ENCODE measurements at regions of chr21 and their contacts with region 1.

Region 1: DNA sequence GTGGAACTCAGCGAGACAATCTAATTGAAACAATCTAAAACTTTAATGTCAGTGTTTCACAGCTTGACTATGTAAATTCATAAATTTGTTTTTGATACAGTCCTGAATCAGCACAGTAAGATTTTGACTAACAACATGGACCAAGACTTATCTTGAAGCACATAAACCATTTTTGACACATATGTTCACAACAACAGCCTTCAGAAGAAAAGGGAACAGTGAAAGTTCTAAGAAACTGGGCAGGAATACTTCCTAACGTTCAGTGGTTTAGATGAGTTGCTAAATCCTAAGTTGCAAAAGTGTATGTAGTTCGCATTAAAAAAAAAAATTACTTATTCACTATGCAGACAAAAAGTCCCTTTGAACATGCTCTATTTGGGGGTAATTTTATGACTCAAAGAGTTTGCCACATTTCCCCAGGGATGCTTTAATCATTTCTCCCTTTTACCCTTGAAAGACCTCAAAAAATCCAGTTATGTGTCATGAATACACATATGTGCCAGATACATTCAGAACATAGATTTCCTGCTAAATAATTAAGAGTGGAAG is 120.2 kb downstream of the MRPL39 start:
- DNase-seq: no peak
- ATAC-seq: peak; percentile 85
- H3K4me3 Mint-ChIP-seq: peak overlapping the region; percentile 49
- H3K27ac Mint-ChIP-seq: peak overlapping the region; percentile 90
- H3K4me1 Mint-ChIP-seq: peaks cover 73% of the 10 kb centered on the region
- H3K27me3 Mint-ChIP-seq: no peaks in the 10 kb centered on the region
- CTCF ChIP-seq: no peak

Region 2: DNA sequence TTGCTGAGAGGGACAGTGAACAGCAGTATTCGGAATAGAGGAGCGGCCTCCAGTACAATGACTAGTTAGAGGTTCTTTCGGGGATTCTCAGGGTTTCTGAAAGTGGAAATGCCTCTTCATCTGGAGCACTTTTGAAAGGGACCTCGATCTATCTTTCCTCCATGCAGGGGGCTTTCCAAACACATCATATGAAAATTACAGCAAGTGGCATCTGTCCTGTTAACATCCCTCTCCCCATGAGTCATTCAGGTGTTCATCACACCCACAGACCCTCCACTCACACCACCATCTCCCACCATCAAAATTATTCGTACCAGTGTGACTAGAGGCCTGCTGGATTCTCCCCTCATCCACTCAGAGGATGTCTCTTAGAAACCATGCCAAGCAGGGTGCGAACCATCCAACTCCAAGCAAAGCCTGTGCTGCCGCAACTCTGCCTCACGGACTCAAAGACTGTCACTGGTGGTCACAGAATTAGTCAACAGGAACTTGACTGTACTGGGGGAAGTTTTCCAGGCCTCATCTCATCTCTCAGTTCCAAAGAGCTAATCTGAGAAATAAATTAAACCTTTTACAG is 90.9 kb before region 1 on chr21:
- CTCF ChIA-PET with region 1: no interaction called
- POLR2A ChIA-PET with region 1: no interaction called
- intact Hi-C with region 1: loop called (anchors 1 kb)
- DNase-seq: peak; percentile 33
- ATAC-seq: peak; percentile 88
- H3K4me3 Mint-ChIP-seq: peak overlapping the region; percentile 81
- H3K27ac Mint-ChIP-seq: peak overlapping the region; percentile 84
- H3K4me1 Mint-ChIP-seq: peaks cover 31% of the 10 kb centered on the region
- H3K27me3 Mint-ChIP-seq: no peaks in the 10 kb centered on the region
- CTCF ChIP-seq: no peak

Region 3: GRCh38 chr21:25457411-25457810 is 29.7 kb before region 1 on chr21:
- CTCF ChIA-PET with region 1: no interaction called
- POLR2A ChIA-PET with region 1: interaction called, 13 read pairs
- intact Hi-C with region 1: loop called (anchors 1 kb)
- DNase-seq: no peak
- ATAC-seq: peak; percentile 65
- H3K4me3 Mint-ChIP-seq: peak overlapping the region; percentile 65
- H3K27ac Mint-ChIP-seq: peak overlapping the region; percentile 87
- H3K4me1 Mint-ChIP-seq: peaks cover 66% of the 10 kb centered on the region
- H3K27me3 Mint-ChIP-seq: no peaks in the 10 kb centered on the region
- CTCF ChIP-seq: no peak

Region 4: DNA sequence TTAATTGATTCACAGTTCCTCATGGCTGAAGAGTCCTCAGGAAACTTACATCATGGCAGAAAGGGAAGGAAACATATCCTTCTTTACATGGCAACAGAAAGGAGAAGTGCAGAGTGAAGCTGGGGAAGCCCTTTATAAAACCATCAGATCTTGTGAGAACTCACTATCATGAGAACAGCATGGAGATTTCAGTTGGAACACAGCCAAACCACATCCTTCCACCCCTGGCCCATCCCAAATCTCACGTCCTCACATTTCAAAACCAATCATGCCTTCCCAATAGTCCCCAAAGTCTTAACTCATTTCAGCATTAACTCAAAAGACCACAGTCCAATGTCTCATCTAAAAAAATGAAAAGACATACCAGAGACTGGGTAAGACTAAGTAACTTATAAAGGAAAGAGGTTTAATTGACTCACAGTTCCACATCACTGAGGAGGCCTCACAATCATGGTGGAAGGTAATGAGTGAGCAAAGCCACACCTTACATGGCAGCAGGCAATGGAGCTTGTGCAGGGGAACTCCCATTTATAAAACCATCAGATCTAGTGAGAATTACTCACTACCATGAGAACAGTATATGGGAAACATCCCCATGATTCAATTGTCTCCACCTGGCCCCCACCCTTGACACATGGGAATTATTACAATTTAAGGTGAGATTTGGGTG is 15.0 kb after region 1 on chr21:
- CTCF ChIA-PET with region 1: interaction called, 6 read pairs
- POLR2A ChIA-PET with region 1: interaction called, 4 read pairs
- intact Hi-C with region 1: loop called (anchors 1 kb)
- DNase-seq: no peak
- ATAC-seq: peak; percentile 83
- H3K4me3 Mint-ChIP-seq: peak overlapping the region; percentile 32
- H3K27ac Mint-ChIP-seq: peak overlapping the region; percentile 82
- H3K4me1 Mint-ChIP-seq: peaks cover 54% of the 10 kb centered on the region
- H3K27me3 Mint-ChIP-seq: no peaks in the 10 kb centered on the region
- CTCF ChIP-seq: no peak

Region 5: GRCh38 chr21:25561668-25562641 is 74.8 kb after region 1 on chr21:
- CTCF ChIA-PET with region 1: interaction called, 5 read pairs
- POLR2A ChIA-PET with region 1: interaction called, 30 read pairs
- intact Hi-C with region 1: loop called (anchors 1 kb)
- DNase-seq: peak; percentile 73
- ATAC-seq: peak; percentile 70
- H3K4me3 Mint-ChIP-seq: peak overlapping the region; percentile 92
- H3K27ac Mint-ChIP-seq: peak overlapping the region; percentile 95
- H3K4me1 Mint-ChIP-seq: peaks cover 60% of the 10 kb centered on the region
- H3K27me3 Mint-ChIP-seq: no peaks in the 10 kb centered on the region
- CTCF ChIP-seq: no peak